SK-N-SH (cell line): ENCODE measurements at regions of chr14 and their contacts with region 1.

Region 1: DNA sequence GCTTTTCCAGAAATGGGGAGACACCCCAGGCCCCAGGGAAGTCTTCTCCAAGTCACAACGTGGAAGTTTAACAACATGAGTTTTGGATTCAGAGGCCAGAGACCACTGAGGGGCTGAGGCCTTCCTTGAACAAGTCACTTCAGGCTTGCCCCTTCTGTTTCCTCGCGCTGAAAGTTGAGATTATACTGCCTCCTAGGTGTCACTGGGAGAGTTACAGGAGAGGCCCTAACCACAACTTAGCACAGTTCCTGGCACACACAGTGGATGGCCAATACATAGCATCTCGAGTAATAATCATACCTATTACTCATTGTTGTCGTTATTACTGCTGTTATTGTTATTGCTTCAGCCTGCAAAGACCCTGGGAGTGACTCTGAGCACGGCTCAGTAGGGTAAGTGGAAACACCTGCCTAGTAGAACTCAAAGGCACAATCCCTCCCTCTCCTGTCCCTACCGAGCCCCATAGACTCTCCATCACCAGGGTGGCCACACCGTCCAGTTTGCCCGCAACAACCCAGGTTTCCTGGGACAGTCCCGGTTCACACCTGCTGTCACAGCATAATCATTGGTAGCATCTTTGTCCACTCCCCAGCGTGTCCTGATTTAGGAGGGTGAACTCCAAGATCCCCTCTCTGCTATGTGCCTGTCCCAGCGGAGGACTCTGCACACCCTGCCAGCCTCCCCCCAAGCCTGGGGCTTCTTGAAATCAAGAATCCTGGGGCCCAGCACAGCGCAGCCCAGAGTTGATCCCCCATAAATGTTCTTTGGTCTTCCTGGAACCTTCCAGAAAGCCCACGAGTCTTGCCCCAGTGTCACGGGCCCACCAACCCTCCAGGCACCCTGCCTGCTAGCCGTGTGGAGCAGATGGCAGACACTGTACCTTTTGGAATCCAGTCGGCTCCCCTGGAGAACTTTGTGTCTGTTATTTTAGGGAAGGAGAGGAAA is 85.0 kb downstream of the SYNE3 start:
- DNase-seq: peak; percentile 71
- H3K4me3 ChIP-seq: no peak overlapping the region
- H3K27ac ChIP-seq: no peak overlapping the region; a peak in 1 of 4 replicates
- H3K4me1 ChIP-seq: peaks cover 0 to 15% of the 10 kb centered on the region in 2 experiments; a peak in 1 of 4 replicates
- H3K27me3 ChIP-seq: no peaks in the 10 kb centered on the region
- CTCF ChIP-seq: peak; percentile 61
- EP300 ChIP-seq: no peak
- RAD21 ChIP-seq: peak; percentile 86

Region 2: GRCh38 chr14:94681300-94682060 is 750.0 kb before region 1 on chr14:
- CTCF ChIA-PET with region 1: interaction called, 72 read pairs
- POLR2A ChIA-PET with region 1: no interaction called
- DNase-seq: peak; percentile 59
- H3K4me3 ChIP-seq: no peak overlapping the region
- H3K27ac ChIP-seq: no peak overlapping the region
- H3K4me1 ChIP-seq: peaks cover 0 to 5% of the 10 kb centered on the region in 2 experiments; a peak in 1 of 4 replicates
- H3K27me3 ChIP-seq: no peaks in the 10 kb centered on the region
- CTCF ChIP-seq: peak; percentile 72
- EP300 ChIP-seq: no peak
- RAD21 ChIP-seq: peak; percentile 66

Region 3: DNA sequence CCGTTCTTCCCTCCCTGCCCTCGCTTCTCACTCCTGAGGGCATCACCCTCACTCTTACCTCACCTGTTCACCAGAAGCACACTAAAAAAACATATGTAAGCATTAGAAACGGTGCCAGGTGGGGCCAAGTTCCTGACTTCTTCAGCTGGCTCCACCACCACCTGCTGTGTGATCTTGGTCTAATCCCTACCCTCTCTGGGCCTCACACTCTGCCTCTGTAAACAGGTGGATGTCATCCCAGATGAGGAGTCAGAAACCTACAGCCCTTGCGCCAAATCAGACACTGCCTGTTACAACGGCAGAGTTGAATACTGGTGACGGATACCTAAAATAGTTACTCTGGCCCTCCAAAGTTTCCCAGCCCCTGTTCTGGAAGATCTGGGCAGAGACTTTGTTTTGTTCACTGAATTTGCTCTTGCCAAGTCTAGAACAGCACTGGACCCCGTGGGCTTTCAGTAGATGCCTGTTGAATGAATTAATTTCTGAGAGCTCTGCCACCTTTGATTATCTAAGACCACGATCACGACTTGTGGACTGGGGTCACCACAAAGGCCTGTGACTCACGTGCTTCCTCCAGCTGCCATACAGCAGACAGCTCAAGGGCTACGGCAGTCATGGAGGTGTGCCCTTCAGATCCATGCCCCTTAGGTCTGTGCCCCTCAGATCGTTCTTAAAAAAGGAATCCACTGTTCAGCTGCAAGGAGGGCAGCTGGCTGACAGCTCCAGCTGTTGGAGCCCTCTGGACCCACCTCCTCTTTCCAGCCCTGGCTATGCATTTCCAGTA is 733.5 kb before region 1 on chr14:
- CTCF ChIA-PET with region 1: interaction called, 13 read pairs
- POLR2A ChIA-PET with region 1: no interaction called
- DNase-seq: no peak
- H3K4me3 ChIP-seq: no peak overlapping the region
- H3K27ac ChIP-seq: no peak overlapping the region
- H3K4me1 ChIP-seq: no peaks in the 10 kb centered on the region
- H3K27me3 ChIP-seq: no peaks in the 10 kb centered on the region
- CTCF ChIP-seq: no peak
- EP300 ChIP-seq: no peak
- RAD21 ChIP-seq: no peak

Region 4: DNA sequence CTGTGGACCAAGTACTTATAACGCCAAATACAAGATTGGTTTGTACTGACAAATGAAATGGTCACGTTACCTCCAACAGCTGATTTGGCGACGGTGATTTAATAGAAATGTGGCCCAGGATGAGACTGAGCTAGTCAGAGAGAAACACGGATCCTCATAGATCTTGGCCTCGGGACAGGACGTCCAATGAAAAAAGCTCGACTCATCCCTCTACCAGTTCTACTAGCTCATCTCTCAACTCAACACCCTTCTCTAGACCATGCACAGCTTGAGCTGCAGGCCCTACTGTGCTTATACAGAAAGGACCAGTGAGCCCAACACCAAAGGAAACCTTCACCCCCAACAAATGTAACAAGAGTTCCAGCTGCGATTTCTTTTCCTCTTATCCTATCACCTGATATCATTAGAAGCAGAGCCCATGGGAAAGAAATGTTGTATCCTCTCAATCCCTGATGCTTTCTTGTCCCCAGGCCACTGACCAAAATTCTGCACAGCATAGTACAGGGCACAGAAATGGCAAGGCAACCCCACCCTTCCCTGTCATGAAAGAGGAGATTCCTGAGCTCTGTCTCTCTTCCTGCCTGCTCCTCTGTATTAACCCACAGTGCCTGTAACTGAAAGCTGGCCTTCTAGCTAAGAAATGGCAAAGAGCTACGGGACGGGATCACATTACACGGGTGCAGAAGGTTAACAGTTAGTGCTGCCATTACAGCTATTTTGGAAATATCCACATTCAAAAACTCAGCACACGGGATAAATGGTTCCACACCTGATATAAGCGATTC is 313.3 kb before region 1 on chr14:
- CTCF ChIA-PET with region 1: interaction called, 12 read pairs
- POLR2A ChIA-PET with region 1: no interaction called
- DNase-seq: no peak
- H3K4me3 ChIP-seq: no peak overlapping the region
- H3K27ac ChIP-seq: peak overlapping the region in 1 of 2 experiments; percentile 64; a peak in 2 of 4 replicates
- H3K4me1 ChIP-seq: peaks cover 7 to 19% of the 10 kb centered on the region in 2 experiments; a peak in 3 of 4 replicates
- H3K27me3 ChIP-seq: no peaks in the 10 kb centered on the region
- CTCF ChIP-seq: no peak
- EP300 ChIP-seq: no peak
- RAD21 ChIP-seq: no peak

Region 5: GRCh38 chr14:95314616-95315482 is 116.6 kb before region 1 on chr14:
- CTCF ChIA-PET with region 1: interaction called, 14 read pairs
- POLR2A ChIA-PET with region 1: no interaction called
- DNase-seq: peak; percentile 27
- H3K4me3 ChIP-seq: no peak overlapping the region
- H3K27ac ChIP-seq: no peak overlapping the region
- H3K4me1 ChIP-seq: peaks cover 22 to 26% of the 10 kb centered on the region in 2 experiments; a peak in 2 of 4 replicates
- H3K27me3 ChIP-seq: no peaks in the 10 kb centered on the region
- CTCF ChIP-seq: no peak
- EP300 ChIP-seq: no peak
- RAD21 ChIP-seq: no peak

Region 6: GRCh38 chr14:95527387-95528002 is 96.0 kb after region 1 on chr14:
- CTCF ChIA-PET with region 1: interaction called, 24 read pairs
- POLR2A ChIA-PET with region 1: no interaction called
- DNase-seq: peak; percentile 59
- H3K4me3 ChIP-seq: peak overlapping the region in 1 of 2 experiments; percentile 39; a peak in 1 of 4 replicates
- H3K27ac ChIP-seq: peak overlapping the region; percentile 36 to 79; a peak in 2 of 4 replicates
- H3K4me1 ChIP-seq: peaks cover 16 to 39% of the 10 kb centered on the region in 2 experiments
- H3K27me3 ChIP-seq: no peaks in the 10 kb centered on the region
- CTCF ChIP-seq: peak; percentile 90
- EP300 ChIP-seq: no peak
- RAD21 ChIP-seq: peak; percentile 81